Esophagus squamous epithelium (tissue), 5 donors: ENCODE measurements at regions of chr15 and their contacts with region 1.

Region 1: GRCh38 chr15:83207622-83208411 is at the start of gene HDGFL3:
- DNase-seq: no peak
- H3K4me3 ChIP-seq: peak within 1 kb of the TSS; percentile 59 to 93 (median 87)
- H3K27ac ChIP-seq: peak within 1 kb of the TSS; percentile 84 to 95 (median 87)
- H3K4me1 ChIP-seq: peaks cover 8 to 42% (median 8%) of the 10 kb centered on the region in 3 donors
- H3K27me3 ChIP-seq: peaks cover 0 to 20% (median 0%) of the 10 kb centered on the region in 4 donors
- CTCF ChIP-seq: no peak
- POLR2A ChIP-seq: peak in 1 of 4 donors; percentile 40
- total RNA-seq, gene HDGFL3: 3.7 to 47.7 (median 17.1) TPM

Region 2: GRCh38 chr15:83011271-83012075 is 196.3 kb before region 1 on chr15 and contains the start of gene C15orf40:
- intact Hi-C with region 1: loop called (anchors 5 kb)
- DNase-seq: peak; percentile 60
- H3K4me3 ChIP-seq: peak within 1 kb of the TSS; percentile 86 to 98 (median 97)
- H3K27ac ChIP-seq: peak within 1 kb of the TSS; percentile 89 to 94 (median 92)
- H3K4me1 ChIP-seq: peaks cover 15 to 35% (median 22%) of the 10 kb centered on the region in 3 donors
- H3K27me3 ChIP-seq: no peaks in the 10 kb centered on the region
- CTCF ChIP-seq: peak; percentile 48 to 86 (median 56)
- POLR2A ChIP-seq: peak in 2 of 4 donors; percentile 71 to 80
- total RNA-seq, gene C15orf40: 6.1 to 31.4 (median 18.6) TPM

Region 3: DNA sequence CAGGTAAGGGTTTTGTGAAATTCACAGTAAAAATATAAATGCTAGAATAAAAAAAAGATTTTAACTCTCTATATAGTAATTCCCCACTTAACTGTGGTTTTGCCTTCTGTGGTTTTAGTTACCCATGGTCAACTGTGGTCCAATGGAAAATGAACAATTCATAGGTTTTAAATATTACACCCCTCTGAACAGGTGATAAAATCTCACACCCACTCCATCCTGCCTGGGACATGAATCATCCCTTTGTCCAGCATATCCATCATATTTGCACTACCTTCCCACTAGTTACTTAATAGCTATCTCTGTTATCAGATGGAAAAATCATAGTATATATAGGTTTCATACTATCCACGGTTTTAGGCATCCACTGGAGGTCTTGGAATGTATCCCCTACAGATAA is 49.4 kb before region 1 on chr15:
- intact Hi-C with region 1: no loop called
- DNase-seq: no peak
- H3K4me3 ChIP-seq: no peak overlapping the region
- H3K27ac ChIP-seq: no peak overlapping the region
- H3K4me1 ChIP-seq: no peaks in the 10 kb centered on the region
- H3K27me3 ChIP-seq: no peaks in the 10 kb centered on the region
- CTCF ChIP-seq: no peak
- POLR2A ChIP-seq: no peak

Region 4: GRCh38 chr15:83283138-83283812 is 75.5 kb after region 1 on chr15:
- intact Hi-C with region 1: no loop called
- DNase-seq: no peak
- H3K4me3 ChIP-seq: peak overlapping the region; percentile 67 to 80 (median 72)
- H3K27ac ChIP-seq: peak overlapping the region; percentile 83 to 91 (median 88)
- H3K4me1 ChIP-seq: peaks cover 8 to 77% (median 13%) of the 10 kb centered on the region in 3 donors
- H3K27me3 ChIP-seq: peaks cover 0 to 69% (median 0%) of the 10 kb centered on the region in 4 donors
- CTCF ChIP-seq: no peak
- POLR2A ChIP-seq: no peak